ENCODE measurements at regions of chr12 and their contacts with region 1.

Region 1: GRCh38 chr12:47651368-47652254 is 54.2 kb downstream of the RPAP3 start:
- DNase-seq: peak; percentile 19 to 32
- ATAC-seq: peak; percentile 77 to 85
- H3K4me3 ChIP-seq: peak overlapping the region in 3 of 4 donors; percentile 8 to 13 (median 10)
- H3K27ac ChIP-seq: no peak overlapping the region
- H3K4me1 ChIP-seq: no peaks in the 10 kb centered on the region
- H3K27me3 ChIP-seq: no peaks in the 10 kb centered on the region
- CTCF ChIP-seq: peak; percentile 49 to 74 (median 54)
- POLR2A ChIP-seq: no peak

Region 2: DNA sequence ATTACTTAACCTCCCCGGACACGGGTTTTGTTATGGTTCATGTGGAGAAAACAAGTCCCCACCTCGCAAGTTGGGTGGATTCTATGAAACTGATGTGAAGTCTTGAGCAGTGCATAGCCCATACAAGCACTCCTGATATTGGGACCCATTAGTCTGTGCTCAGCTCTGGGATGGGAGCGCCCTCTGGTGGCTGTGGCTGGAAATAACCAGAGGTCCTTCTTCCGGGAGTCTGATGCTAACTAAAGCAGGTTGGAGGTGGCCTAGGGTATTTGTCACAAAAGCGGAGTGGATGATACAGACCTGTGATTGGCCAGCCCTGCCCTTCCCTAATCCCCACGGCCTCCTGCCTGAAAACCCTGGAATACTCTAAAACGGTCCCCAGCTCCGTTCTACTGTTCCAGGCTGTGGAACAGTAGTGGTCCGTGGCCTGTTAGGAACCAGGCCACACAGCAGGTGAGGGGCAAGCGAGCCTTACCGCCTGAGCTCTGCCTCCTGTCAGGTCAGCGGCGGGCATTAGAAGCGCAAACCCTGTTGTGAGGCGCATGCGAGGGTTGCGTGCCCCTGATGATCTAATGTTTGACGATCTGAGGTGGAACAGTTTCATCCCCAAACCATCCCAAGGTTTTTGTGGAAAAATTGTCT is 127.8 kb after region 1 on chr12:
- in situ Hi-C with region 1: no loop called
- intact Hi-C with region 1: loop called (anchors 5 kb)
- DNase-seq: peak; percentile 69 to 81
- ATAC-seq: peak; percentile 74 to 83
- H3K4me3 ChIP-seq: no peak overlapping the region
- H3K27ac ChIP-seq: no peak overlapping the region
- H3K4me1 ChIP-seq: peaks cover 47 to 55% of the 10 kb centered on the region in 2 donors
- H3K27me3 ChIP-seq: no peaks in the 10 kb centered on the region
- CTCF ChIP-seq: peak; percentile 89 to 95 (median 93)
- POLR2A ChIP-seq: no peak

Region 3: DNA sequence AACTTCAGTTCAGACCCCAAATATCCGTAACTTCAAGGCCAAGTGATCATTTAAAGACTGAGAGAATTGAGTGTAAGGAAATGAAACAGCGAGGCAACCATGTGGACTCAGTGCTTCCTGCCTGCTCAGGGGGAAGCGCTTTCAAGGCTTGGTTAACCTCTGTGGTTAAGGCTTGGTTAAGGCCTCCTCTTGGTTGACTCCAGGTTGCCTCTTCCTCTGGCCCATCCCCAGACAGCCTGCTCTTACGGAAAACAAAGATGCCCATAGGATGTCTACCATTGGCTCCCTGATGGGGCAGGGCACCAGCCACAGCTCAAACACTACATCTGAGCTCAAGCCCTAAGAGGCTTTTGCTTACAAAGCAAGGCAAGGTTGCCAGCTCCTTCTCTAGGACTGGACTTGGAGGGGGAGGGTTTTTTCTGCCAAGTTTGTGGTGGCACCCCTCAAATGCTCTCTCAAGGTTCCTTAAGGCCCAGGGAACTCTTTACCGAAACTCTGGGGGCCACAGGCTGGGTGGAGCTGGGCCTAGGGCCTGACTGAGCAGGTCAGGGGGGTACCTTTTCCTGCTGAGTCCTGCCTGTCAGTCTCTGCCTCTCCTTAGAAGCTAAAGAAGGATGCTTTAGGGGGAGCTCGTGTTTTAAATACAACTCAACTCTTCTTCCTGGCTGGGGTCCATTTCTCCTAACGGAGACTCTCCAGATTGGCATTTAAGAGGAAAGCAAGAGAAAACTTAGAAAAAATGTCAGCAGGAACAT is 338.9 kb after region 1 on chr12:
- in situ Hi-C with region 1: no loop called
- intact Hi-C with region 1: no loop called
- DNase-seq: no peak
- ATAC-seq: no peak
- H3K4me3 ChIP-seq: no peak overlapping the region
- H3K27ac ChIP-seq: no peak overlapping the region
- H3K4me1 ChIP-seq: peaks cover 12 to 19% of the 10 kb centered on the region in 2 donors
- H3K27me3 ChIP-seq: no peaks in the 10 kb centered on the region
- CTCF ChIP-seq: no peak
- POLR2A ChIP-seq: no peak